Activated CD8-positive, alpha-beta T cell treated with anti-CD3 and anti-CD28 coated beads, Interleukin-2, amount 10 ng/mL, durations not matched to agents 7 days and 5 days (primary cell): ENCODE measurements at regions of chr1 and their contacts with region 1.

Region 1: GRCh38 chr1:41282679-41283317 is 40.7 kb upstream of the SCMH1 start:
- DNase-seq: peak; percentile 35
- ATAC-seq: peak; percentile 55
- H3K4me3 Mint-ChIP-seq: no peak overlapping the region
- H3K27ac Mint-ChIP-seq: no peak overlapping the region
- H3K4me1 Mint-ChIP-seq: no peaks in the 10 kb centered on the region
- H3K27me3 Mint-ChIP-seq: peaks cover 17% of the 10 kb centered on the region

Region 2: DNA sequence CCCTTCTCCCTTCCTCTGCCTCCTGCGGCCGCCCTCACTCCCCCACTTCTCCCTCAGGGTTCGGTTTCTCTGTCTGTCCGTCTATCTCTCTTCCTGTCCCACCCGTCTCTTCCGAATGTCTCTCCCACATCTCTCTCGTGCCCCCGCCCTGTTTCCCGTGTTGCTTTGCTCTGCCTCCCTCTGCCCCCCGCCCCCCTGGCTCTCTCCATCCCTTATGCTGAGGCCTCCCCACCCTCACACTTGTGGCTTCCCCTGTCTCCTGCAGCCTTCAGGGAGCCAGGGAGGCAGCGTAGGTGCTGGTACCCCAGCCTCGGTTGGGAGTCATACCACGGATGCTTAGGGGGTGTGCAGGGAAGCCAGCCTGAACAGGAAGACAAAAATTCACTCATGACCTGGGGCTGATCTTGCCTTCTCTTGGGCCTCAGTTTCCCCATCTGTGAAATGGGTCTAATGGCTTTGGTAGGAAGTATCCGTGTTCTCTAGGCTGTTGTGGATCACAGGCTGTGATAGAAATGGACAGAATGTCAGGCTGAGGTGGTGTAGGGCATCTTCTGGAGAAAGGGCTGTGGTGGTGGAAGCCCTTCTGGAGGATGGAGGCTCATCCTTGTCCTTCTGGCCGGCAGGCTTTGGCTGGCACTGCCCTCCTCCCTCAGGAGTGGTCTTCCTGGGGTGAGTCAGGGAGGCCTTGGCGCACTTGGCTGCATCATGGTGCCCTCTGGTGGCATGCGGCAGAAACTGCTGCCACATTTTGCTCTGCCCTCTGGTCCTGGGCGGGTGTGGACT is 133.9 kb after region 1 on chr1:
- CTCF ChIA-PET with region 1: interaction called, 28 read pairs
- POLR2A ChIA-PET with region 1: no interaction called
- DNase-seq: peak; percentile 59
- ATAC-seq: peak; percentile 63
- H3K4me3 Mint-ChIP-seq: no peak overlapping the region
- H3K27ac Mint-ChIP-seq: no peak overlapping the region
- H3K4me1 Mint-ChIP-seq: no peaks in the 10 kb centered on the region
- H3K27me3 Mint-ChIP-seq: no peaks in the 10 kb centered on the region

Region 3: DNA sequence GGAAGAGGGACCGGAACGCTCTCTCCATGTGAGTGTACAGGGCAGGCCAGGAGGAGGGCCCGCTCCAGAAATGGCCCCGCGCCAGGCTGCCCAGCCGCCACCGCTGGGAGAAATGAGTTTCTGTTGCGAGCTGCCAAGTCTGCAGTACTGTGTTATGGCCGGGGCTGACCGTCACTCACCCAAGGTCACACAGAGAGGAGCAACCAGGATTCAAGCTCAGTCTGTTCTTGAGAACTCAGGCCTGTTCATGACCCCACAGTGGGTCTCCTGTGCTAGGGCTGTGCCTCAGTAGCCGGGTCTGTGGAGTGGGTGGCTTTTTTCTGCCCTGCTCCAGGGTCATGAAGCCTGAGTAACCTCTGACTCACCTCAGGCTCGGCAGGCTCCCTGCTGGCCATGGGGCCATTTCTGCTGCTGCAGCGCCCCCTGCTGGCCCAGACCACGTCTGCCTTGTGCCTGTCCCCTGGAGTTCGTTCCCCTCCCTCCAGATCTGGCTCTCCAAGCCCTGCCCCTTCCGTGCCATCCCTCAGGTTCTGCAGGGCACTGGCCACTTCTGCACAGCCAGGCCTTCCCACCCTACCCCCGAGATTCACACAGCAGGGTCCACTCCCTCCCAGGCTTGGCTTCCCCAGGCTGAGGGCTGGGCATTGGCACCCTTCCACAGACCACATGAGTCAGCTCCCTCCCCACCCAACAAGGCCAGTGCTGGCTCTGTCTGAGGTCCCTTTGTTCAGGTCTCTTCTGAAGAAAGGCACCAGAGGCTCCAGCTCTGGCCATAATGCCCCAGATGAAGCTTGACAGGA is 149.9 kb after region 1 on chr1:
- CTCF ChIA-PET with region 1: interaction called, 11 read pairs
- POLR2A ChIA-PET with region 1: no interaction called
- DNase-seq: peak; percentile 75
- ATAC-seq: peak; percentile 86
- H3K4me3 Mint-ChIP-seq: no peak overlapping the region
- H3K27ac Mint-ChIP-seq: no peak overlapping the region
- H3K4me1 Mint-ChIP-seq: no peaks in the 10 kb centered on the region
- H3K27me3 Mint-ChIP-seq: peaks cover 16% of the 10 kb centered on the region